RWPE1 (cell line): ENCODE measurements at regions of chr19 and their contacts with region 1.

Region 1: DNA sequence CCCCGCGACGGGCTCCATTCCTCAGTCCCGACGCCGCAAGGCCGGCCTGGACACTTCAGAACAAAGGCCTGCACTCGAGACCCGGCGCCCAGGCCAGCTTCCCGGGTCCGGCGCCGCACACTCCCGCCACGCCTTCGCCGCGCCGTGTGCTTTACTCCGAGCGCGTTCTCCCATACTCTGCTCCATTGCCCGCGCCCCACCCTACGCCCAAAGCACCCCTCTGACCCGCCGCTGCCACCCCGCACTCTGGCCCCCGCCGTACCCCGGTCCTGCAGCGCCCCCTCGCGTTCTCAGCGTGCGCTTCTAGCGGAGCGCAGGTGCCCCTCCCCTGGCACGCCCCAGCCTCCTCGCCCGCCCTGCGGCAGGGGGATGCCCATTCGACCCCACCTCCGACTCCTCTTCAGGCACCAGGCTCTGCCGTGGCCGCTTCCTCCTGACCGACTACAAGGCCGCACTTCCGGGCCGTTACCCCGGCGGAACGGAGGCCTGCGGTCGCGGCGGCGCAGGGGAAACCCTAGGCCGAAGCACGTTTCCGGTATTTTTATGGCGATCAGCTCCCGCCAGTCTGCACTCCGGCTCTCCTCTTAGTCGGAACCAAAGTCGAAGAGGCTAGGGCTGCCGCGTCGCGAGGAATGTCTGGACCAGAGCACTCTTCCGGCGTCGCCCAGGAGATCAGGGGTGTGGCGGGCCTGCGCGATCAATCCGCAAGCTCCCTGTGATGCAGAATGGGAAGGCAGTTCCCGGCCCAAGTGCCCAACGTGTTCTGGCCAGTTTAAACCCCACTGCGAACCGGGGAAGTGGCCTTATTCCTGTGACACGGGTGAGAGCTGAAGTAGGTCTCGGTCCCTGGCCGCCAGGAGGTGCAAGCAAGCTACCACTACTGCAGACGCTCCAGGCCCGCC is at the start of gene ZBTB45:
- DNase-seq: peak; percentile 88
- H3K27ac ChIP-seq: peak within 1 kb of the TSS; percentile 98
- CTCF ChIP-seq: peak; percentile 73

Region 2: GRCh38 chr19:57754091-57754673 is 765.4 kb before region 1 on chr19:
- CTCF ChIA-PET with region 1: no interaction called
- POLR2A ChIA-PET with region 1: no interaction called
- DNase-seq: no peak
- H3K27ac ChIP-seq: no peak overlapping the region
- CTCF ChIP-seq: no peak

Region 3: DNA sequence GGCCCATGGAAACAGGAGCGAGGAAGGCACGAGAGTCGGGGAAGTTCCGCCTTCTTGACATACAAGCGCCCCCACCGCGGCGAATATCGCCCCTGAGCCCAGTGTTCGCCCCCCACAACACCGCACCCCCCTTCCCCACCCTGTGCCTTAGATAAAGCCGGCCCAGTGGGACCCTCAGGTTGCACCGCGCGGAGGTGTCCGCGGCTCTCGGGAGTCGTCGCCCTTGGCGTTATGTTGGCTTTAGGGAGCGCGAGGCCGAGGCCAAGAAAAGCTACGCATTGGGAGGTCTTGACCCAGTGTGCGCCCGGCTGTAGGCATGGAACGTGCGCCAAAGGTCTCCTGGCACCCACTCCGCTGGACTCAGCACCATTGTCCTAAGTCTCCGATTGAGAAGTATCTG is 79.0 kb before region 1 on chr19:
- CTCF ChIA-PET with region 1: no interaction called
- POLR2A ChIA-PET with region 1: no interaction called
- DNase-seq: no peak
- H3K27ac ChIP-seq: peak overlapping the region; percentile 80
- CTCF ChIP-seq: no peak

Region 4: GRCh38 chr19:58543826-58544590 is 24.4 kb after region 1 on chr19 and contains the start of gene TRIM28:
- CTCF ChIA-PET with region 1: interaction called, 11 read pairs
- POLR2A ChIA-PET with region 1: interaction called, 7 read pairs
- DNase-seq: peak; percentile 100
- H3K27ac ChIP-seq: peak within 1 kb of the TSS; percentile 99
- CTCF ChIP-seq: no peak